Calu3 (cell line): ENCODE measurements at regions of chr2 and their contacts with region 1.

Region 1: DNA sequence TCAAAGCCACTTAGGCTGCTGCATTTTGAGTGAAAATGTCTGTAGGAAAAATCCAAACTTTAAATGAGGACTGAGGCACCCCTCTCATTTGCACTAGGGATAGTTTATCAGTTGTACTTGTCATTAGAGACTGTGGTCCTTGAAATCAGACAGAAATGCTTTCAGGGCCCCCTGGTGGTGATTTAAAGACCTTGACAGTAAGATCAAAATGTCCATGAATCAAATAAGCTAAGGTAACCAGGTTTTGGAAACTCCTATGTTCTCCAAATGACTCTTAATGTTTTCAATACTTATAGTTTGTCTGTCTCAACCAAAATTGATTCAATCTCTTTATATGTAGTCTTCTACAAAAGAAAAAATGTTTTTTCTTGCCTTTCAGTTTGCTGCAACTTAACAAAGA is 28.8 kb upstream of the DDX18 start:
- DNase-seq: peak; percentile 62
- H3K4me3 Mint-ChIP-seq: no peak overlapping the region
- H3K27ac Mint-ChIP-seq: no peak overlapping the region
- H3K4me1 Mint-ChIP-seq: no peaks in the 10 kb centered on the region
- H3K27me3 Mint-ChIP-seq: no peaks in the 10 kb centered on the region
- CTCF ChIP-seq: peak; percentile 59

Region 2: GRCh38 chr2:116510158-116510557 is 1275.6 kb before region 1 on chr2:
- CTCF ChIA-PET with region 1: no interaction called
- intact Hi-C with region 1: loop called (anchors 10 kb)
- DNase-seq: peak; percentile 4
- H3K4me3 Mint-ChIP-seq: no peak overlapping the region
- H3K27ac Mint-ChIP-seq: no peak overlapping the region
- H3K4me1 Mint-ChIP-seq: no peaks in the 10 kb centered on the region
- H3K27me3 Mint-ChIP-seq: no peaks in the 10 kb centered on the region
- CTCF ChIP-seq: peak; percentile 47

Region 3: DNA sequence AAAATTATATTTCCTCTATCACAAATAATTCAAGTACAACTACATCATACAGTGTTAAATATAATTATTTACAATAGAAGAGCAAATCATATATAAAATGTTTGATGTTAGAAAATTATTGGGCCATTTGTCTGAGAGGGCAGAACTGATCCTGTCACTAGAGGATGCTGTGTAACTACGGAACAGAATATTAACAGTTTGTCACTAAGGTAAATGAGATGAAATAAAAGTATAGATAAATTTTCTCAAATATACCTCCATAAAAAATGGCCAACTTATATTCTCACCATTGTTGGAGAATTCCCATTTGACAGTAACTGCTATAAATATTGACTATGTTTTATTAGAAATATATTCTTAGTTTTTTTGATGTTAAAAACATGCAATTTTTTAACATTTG is 1038.6 kb before region 1 on chr2:
- CTCF ChIA-PET with region 1: no interaction called
- intact Hi-C with region 1: loop called (anchors 2 kb)
- DNase-seq: no peak
- H3K4me3 Mint-ChIP-seq: no peak overlapping the region
- H3K27ac Mint-ChIP-seq: no peak overlapping the region
- H3K4me1 Mint-ChIP-seq: no peaks in the 10 kb centered on the region
- H3K27me3 Mint-ChIP-seq: no peaks in the 10 kb centered on the region
- CTCF ChIP-seq: no peak

Region 4: DNA sequence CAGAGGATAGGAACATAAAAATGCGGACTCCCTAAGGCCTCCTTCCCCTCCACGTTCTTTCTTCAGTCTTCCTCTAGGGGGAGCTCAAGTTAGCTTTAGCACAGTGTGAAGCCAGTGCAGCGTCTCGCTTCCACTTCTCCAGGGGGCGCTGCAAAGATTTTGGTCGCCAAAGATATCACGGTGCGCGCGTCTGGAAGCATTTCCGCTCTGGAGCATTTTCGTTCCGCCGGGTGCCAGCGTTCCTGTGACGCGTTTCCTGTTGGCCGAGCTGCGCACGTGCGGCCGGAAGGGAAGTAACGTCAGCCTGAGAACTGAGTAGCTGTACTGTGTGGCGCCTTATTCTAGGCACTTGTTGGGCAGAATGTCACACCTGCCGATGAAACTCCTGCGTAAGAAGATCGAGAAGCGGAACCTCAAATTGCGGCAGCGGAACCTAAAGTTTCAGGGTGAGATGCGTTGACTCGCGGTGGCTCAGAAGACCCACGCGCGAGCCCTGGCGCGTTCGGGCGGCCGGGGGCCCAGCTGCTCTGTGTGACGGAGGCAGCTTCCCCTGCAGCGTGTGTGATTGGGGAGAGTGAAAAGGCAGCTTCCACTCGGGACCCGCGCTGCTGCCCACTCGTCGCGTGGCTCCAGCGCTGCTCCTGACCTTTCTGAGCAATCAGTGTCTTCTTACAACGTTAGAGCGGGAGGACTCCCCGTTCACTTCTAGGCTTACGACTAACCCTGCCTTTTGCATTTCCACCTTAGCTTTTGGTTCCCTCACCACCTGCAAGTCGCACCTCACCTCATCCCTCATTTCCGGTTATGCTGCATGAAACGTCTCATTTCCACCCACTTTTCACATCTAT is 28.9 kb after region 1 on chr2 and contains the start of gene DDX18:
- CTCF ChIA-PET with region 1: interaction called, 11 read pairs
- intact Hi-C with region 1: no loop called
- DNase-seq: peak; percentile 96
- H3K4me3 Mint-ChIP-seq: peak within 1 kb of the TSS; percentile 90
- H3K27ac Mint-ChIP-seq: peak within 1 kb of the TSS; percentile 89
- H3K4me1 Mint-ChIP-seq: peaks cover 7% of the 10 kb centered on the region
- H3K27me3 Mint-ChIP-seq: no peaks in the 10 kb centered on the region
- CTCF ChIP-seq: peak; percentile 98
- total RNA-seq, gene DDX18: 106 and 114 TPM in 2 replicates